Dorsolateral prefrontal cortex (tissue), 120 donors: ENCODE measurements at regions of chr11 and their contacts with region 1.

Region 1: GRCh38 chr11:35951658-35952057 is 7.8 kb downstream of the LDLRAD3 start:
- DNase-seq: no peak
- H3K4me3 ChIP-seq: no peak overlapping the region
- H3K27ac ChIP-seq: peak overlapping the region in 7 of 59 donors; percentile 15 to 86 (median 30)
- H3K27me3 ChIP-seq: no peaks in the 10 kb centered on the region
- CTCF ChIP-seq: no peak

Region 2: DNA sequence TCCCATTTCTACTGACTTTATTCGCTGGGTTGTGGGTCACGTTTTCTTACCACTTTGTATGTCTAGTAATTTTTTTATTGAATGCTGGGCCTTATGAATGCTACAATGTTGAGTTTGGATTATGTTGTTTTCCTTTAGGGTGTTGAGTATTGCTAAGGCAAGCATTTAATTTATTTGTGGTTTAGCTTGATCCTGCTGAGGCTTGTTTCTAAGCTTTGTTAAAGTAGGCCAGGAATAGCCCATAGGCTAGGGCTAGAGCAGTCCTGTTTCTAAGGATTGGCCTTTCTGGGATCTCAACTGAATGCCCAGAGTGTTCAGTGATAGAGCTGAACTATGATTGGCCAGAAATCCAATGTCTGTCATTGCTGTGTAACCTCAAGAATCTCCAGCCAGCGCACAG is 63.9 kb before region 1 on chr11:
- intact Hi-C with region 1: no loop called
- DNase-seq: no peak
- H3K4me3 ChIP-seq: no peak overlapping the region
- H3K27ac ChIP-seq: no peak overlapping the region
- H3K27me3 ChIP-seq: no peaks in the 10 kb centered on the region
- CTCF ChIP-seq: no peak

Region 3: GRCh38 chr11:35907648-35908431 is 43.8 kb before region 1 on chr11:
- intact Hi-C with region 1: loop called in 1 of 2 experiments (anchors 2 kb)
- DNase-seq: no peak
- H3K4me3 ChIP-seq: no peak overlapping the region
- H3K27ac ChIP-seq: peak overlapping the region in 7 of 59 donors; percentile 2 to 28 (median 8)
- H3K27me3 ChIP-seq: no peaks in the 10 kb centered on the region
- CTCF ChIP-seq: no peak